GM10248 (cell line): ENCODE measurements at regions of chr3 and their contacts with region 1.

Region 1: GRCh38 chr3:42101048-42101447 is 9.9 kb downstream of the TRAK1 start:
- DNase-seq: no peak
- CTCF ChIP-seq: no peak

Region 2: DNA sequence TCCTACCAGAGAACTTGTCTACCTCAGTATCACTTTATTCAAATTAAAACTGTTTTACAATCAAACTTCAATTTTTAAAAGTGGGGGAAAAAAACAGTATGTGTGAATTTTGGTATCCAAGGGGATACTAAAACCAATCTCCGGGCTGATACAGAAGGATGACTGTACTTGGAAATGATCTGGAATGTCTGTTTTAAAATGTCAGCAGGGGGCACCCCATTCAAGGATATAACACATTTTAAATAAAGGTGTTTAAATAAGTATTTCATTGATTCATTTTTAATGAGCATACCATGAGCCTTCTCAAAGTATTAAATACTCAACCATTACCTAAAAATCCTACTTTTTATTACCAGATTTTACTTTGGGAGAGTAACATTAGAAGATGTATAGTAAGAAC is 207.1 kb before region 1 on chr3:
- CTCF ChIA-PET with region 1: interaction called, 29 read pairs
- POLR2A ChIA-PET with region 1: no interaction called
- DNase-seq: peak; percentile 23
- CTCF ChIP-seq: peak; percentile 28

Region 3: GRCh38 chr3:41907330-41908073 is 193.5 kb before region 1 on chr3:
- CTCF ChIA-PET with region 1: interaction called, 10 read pairs
- POLR2A ChIA-PET with region 1: no interaction called
- DNase-seq: no peak
- CTCF ChIP-seq: no peak

Region 4: GRCh38 chr3:42012935-42013690 is 87.9 kb before region 1 on chr3:
- CTCF ChIA-PET with region 1: interaction called, 14 read pairs
- POLR2A ChIA-PET with region 1: no interaction called
- DNase-seq: peak; percentile 90
- CTCF ChIP-seq: peak; percentile 30

Region 5: DNA sequence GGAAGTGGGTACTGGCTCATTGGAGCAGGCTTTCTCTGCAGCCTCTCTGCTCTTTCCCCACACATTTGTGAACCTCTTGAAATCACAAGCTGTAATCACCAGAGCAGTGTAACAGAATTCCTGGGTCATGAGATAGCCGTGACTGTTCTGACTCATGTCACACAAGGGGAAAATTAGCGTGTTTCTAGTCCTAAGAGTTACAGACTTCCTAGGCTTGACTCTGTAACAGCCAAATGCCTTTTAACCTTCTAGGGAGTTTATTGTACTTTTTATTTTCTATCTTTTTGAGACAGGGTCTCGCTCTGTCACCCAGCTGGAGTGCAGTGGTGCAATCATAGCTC is 64.6 kb before region 1 on chr3:
- CTCF ChIA-PET with region 1: interaction called, 11 read pairs
- POLR2A ChIA-PET with region 1: no interaction called
- DNase-seq: no peak
- CTCF ChIP-seq: no peak

Region 6: GRCh38 chr3:42071904-42072592 is 29.0 kb before region 1 on chr3:
- CTCF ChIA-PET with region 1: interaction called, 34 read pairs
- POLR2A ChIA-PET with region 1: no interaction called
- DNase-seq: peak; percentile 39
- CTCF ChIP-seq: no peak

Region 7: GRCh38 chr3:42118762-42119361 is 17.8 kb after region 1 on chr3:
- CTCF ChIA-PET with region 1: interaction called, 56 read pairs
- POLR2A ChIA-PET with region 1: no interaction called
- DNase-seq: peak; percentile 83
- CTCF ChIP-seq: peak; percentile 65